BJ (cell line): ENCODE measurements at regions of chr7 and their contacts with region 1.

Region 1: GRCh38 chr7:25851332-25852210 is 300.4 kb upstream of the NFE2L3 start:
- DNase-seq: no peak
- H3K4me3 ChIP-seq: no peak overlapping the region
- H3K27me3 ChIP-seq: peaks cover 1% of the 10 kb centered on the region; the same call in 1 of the 2 replicates
- CTCF ChIP-seq: peak; percentile 85

Region 2: DNA sequence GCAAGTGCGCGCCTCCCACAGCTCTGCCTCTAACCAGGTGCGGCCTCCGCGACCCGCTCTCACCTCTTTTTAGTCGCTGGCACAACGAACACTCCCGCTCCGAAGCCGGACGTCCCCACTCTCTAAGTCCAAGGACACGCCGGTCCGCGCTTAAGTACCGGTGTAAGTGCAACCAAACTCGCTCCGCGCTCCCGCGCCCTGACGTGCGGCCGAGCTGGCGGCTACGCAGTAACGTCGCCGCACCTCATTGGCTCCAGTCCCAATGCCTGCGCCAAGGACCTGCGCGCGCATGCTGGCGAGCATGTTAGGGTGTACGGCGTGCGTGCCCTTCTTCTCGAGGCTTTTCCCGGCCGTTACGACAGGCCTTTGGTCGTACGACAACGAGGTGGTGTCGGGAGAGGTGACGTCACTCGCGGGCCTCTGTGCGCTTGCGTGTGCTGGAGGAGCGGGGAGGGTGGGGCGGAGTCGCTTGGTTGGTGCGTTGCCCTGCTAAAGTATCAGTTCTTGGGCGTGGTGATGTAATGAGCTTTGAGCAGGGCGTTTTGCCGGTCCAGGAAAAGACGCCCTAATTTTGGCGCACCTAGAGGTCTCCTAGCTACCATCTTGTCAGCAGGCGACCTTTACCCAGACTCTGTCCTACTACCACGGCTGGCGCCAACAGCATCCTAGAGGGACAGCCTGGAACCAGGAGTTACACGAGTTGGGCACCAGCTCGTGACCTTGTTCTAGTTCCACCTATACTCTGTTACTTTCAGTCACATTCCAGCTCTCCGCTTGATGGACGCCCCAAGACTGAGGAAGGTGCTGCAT is 726.2 kb before region 1 on chr7 and contains the start of gene CYCS:
- CTCF ChIA-PET with region 1: no interaction called
- POLR2A ChIA-PET with region 1: interaction called, 15 read pairs
- DNase-seq: peak; percentile 98
- H3K4me3 ChIP-seq: peak within 1 kb of the TSS; percentile 55
- H3K27me3 ChIP-seq: no peaks in the 10 kb centered on the region
- CTCF ChIP-seq: no peak
- polyA plus RNA-seq, gene CYCS: 19.4 and 55.1 TPM in 2 replicates

Region 3: DNA sequence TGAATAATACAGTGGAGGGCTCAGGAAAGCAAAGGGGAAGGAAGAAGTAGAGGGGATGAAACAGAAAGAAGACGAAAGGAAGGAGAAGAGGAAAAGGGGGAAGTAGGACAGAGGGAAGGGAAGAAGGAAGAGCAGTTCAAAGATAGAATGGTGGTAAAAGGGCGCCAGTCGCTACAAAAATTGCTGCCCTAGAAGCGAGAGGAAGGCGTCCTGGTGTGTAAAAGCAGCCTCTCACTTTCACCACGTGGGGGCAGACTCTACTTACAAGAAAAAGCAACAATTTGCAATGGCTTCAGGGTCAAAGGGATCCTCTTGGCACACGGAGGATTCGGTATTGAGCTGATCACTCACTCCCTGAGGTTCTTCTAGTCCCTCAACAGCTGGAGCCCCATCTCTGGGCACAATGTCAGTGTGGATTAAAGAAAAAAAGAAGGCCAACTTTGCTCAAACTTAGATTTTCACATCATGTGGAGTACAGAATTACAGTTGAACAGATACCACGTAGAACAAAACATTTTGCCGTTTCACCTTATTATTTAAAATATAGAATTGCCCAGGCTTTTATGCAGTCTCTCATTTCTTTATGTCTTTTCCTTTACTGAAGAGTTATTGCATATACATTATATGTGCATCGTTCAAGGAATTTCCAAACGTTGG is 591.9 kb before region 1 on chr7:
- CTCF ChIA-PET with region 1: interaction called, 17 read pairs
- POLR2A ChIA-PET with region 1: no interaction called
- DNase-seq: no peak
- H3K4me3 ChIP-seq: no peak overlapping the region
- H3K27me3 ChIP-seq: 0 out of 2 replicates have a peak, but pooled peaks cover 2% of the 10 kb centered on the region
- CTCF ChIP-seq: peak; percentile 86

Region 4: GRCh38 chr7:25389489-25390106 is 462.0 kb before region 1 on chr7:
- CTCF ChIA-PET with region 1: interaction called, 25 read pairs
- POLR2A ChIA-PET with region 1: no interaction called
- DNase-seq: no peak
- H3K4me3 ChIP-seq: no peak overlapping the region
- H3K27me3 ChIP-seq: no peaks in the 10 kb centered on the region; the same call in none of the 2 replicates
- CTCF ChIP-seq: peak; percentile 54

Region 5: DNA sequence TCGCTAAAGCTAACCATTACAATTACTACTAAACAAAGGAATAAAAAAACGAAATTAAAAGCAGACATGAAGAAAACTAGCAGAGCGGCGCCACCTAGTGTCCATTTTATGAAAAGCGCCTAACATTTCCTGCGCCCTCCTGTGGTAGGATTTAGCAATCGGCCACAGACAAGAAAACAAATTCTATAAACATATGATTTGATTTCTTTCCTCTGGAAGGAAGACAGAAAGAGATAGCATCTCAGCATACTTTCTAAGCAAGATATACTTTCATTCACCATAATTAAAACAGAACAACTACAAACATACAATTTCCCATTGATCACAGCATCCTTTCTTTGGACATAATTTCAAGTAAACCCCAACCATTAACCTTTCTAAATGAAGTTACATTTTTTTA is 285.6 kb before region 1 on chr7:
- CTCF ChIA-PET with region 1: interaction called, 54 read pairs
- POLR2A ChIA-PET with region 1: no interaction called
- DNase-seq: peak; percentile 15
- H3K4me3 ChIP-seq: no peak overlapping the region
- H3K27me3 ChIP-seq: peaks cover 3% of the 10 kb centered on the region; the same call in 1 of the 2 replicates
- CTCF ChIP-seq: peak; percentile 100

Region 6: GRCh38 chr7:25725451-25725850 is 126.1 kb before region 1 on chr7:
- CTCF ChIA-PET with region 1: interaction called, 10 read pairs
- POLR2A ChIA-PET with region 1: no interaction called
- DNase-seq: no peak
- H3K4me3 ChIP-seq: no peak overlapping the region
- H3K27me3 ChIP-seq: no peaks in the 10 kb centered on the region
- CTCF ChIP-seq: no peak

Region 7: GRCh38 chr7:25877802-25878789 is 26.5 kb after region 1 on chr7:
- CTCF ChIA-PET with region 1: no interaction called
- POLR2A ChIA-PET with region 1: no interaction called
- DNase-seq: no peak
- H3K4me3 ChIP-seq: no peak overlapping the region
- H3K27me3 ChIP-seq: peaks cover 14% of the 10 kb centered on the region
- CTCF ChIP-seq: no peak

Region 8: GRCh38 chr7:25894002-25894901 is 42.7 kb after region 1 on chr7:
- CTCF ChIA-PET with region 1: no interaction called
- POLR2A ChIA-PET with region 1: no interaction called
- DNase-seq: no peak
- H3K4me3 ChIP-seq: no peak overlapping the region
- H3K27me3 ChIP-seq: peaks cover 9% of the 10 kb centered on the region
- CTCF ChIP-seq: no peak

Region 9: GRCh38 chr7:26291699-26292538 is 440.3 kb after region 1 on chr7 and contains the start of gene SNX10:
- CTCF ChIA-PET with region 1: no interaction called
- POLR2A ChIA-PET with region 1: no interaction called
- DNase-seq: no peak
- H3K4me3 ChIP-seq: no peak within 1 kb of the TSS
- H3K27me3 ChIP-seq: peaks cover 3% of the 10 kb centered on the region; the same call in 1 of the 2 replicates
- CTCF ChIP-seq: no peak
- polyA plus RNA-seq, gene SNX10: not detected in 2 replicates